Panc1 (cell line): ENCODE measurements at regions of chr1 and their contacts with region 1.

Region 1: GRCh38 chr1:244980605-244981004 is 116.3 kb upstream of the HNRNPU start:
- DNase-seq: no peak
- ATAC-seq: no peak
- H3K4me3 ChIP-seq: no peak overlapping the region
- H3K27ac ChIP-seq: no peak overlapping the region
- H3K4me1 ChIP-seq: no peaks in the 10 kb centered on the region
- H3K27me3 ChIP-seq: no peaks in the 10 kb centered on the region
- CTCF ChIP-seq: no peak

Region 2: DNA sequence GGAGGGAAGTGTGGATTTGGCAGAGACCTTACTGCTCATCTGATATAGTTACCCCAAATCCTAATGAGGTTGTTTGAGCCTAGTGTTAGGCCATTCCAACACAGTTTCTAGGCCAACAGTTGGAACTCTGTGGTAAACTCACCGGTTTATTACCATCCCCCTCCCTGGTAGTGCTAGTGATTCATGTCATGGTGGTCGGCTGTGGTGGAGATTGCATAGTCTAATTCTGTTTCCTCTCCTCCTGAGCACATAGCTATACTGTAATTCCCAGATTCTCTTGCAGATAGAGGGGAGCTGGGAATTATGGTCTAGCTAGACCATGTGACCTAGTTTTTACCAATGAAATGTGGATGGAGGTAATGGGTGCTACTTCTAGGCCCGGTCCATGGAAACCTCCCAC is 50.4 kb after region 1 on chr1:
- CTCF ChIA-PET with region 1: no interaction called
- POLR2A ChIA-PET with region 1: interaction called, 12 read pairs
- in situ Hi-C with region 1: no loop called
- intact Hi-C with region 1: no loop called
- DNase-seq: no peak
- ATAC-seq: no peak
- H3K4me3 ChIP-seq: no peak overlapping the region
- H3K27ac ChIP-seq: no peak overlapping the region
- H3K4me1 ChIP-seq: no peaks in the 10 kb centered on the region
- H3K27me3 ChIP-seq: no peaks in the 10 kb centered on the region
- CTCF ChIP-seq: no peak